ENCODE measurements at regions of chr19 and their contacts with region 1.

Region 1: GRCh38 chr19:38402967-38403861 is at the start of gene FAM98C:
- DNase-seq: peak; percentile 99 to 100
- ATAC-seq: peak; percentile 93 to 98
- H3K4me3 ChIP-seq: peak within 1 kb of the TSS; percentile 66
- H3K27ac ChIP-seq: peak within 1 kb of the TSS; percentile 80 to 89
- H3K4me1 ChIP-seq: peaks cover 10% of the 10 kb centered on the region
- CTCF ChIP-seq: peak; percentile 100
- EP300 ChIP-seq: no peak
- POLR2A ChIP-seq: peak; percentile 72
- RAD21 ChIP-seq: peak; percentile 96 to 100
- polyA plus RNA-seq, gene FAM98C: 12.8 and 13.8 TPM in 2 replicates

Region 2: DNA sequence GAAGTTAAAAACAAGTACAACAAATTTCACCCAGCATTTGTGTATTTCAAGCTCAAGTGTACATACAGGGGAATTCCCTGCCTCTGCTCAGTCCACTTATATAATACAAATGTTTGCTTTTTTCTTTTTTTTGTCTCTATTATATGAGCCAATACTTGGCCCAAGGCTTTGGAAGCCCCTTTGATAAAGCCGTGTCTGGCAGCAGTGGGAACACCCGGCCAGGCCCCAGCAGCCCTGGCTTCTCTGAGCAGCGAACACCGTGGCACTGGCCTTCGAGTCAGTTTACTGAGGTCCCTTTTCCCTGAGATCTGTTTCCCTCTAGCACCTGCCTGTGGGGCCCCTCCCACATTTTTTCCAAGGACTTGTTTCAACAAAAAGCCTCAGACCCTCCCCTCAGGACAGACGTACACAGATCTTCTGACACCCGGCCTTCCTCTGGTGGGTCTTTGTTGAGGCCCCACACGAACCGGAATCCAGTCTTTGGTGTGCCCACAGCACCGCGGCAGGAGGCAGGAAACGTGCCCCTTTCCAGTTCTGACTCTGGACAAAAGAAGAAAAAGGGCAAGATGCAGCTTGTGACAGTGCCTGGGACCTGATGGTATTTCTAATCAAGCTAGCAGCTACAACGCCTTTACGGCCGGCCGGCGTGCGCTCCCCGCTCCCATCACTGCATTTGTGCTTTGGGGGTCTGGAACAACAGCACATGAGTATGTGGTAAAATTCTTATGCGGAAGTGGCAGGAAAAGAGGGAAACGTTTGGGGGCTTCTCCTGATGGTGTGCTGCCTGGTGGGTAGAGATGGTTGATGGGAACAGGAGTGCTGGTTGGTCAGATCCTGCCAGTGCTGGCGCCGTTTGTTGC is 482.4 kb before region 1 on chr19:
- CTCF ChIA-PET with region 1: no interaction called
- POLR2A ChIA-PET with region 1: no interaction called
- DNase-seq: no peak
- ATAC-seq: 0 out of 6 replicates have a peak, but pooled peaks of 1 of the 2 experiments have one; percentile 23
- H3K4me3 ChIP-seq: no peak overlapping the region
- H3K27ac ChIP-seq: no peak overlapping the region
- H3K4me1 ChIP-seq: peaks cover 9% of the 10 kb centered on the region; the same call in 2 of the 3 replicates
- CTCF ChIP-seq: no peak
- EP300 ChIP-seq: no peak
- POLR2A ChIP-seq: no peak
- RAD21 ChIP-seq: no peak

Region 3: DNA sequence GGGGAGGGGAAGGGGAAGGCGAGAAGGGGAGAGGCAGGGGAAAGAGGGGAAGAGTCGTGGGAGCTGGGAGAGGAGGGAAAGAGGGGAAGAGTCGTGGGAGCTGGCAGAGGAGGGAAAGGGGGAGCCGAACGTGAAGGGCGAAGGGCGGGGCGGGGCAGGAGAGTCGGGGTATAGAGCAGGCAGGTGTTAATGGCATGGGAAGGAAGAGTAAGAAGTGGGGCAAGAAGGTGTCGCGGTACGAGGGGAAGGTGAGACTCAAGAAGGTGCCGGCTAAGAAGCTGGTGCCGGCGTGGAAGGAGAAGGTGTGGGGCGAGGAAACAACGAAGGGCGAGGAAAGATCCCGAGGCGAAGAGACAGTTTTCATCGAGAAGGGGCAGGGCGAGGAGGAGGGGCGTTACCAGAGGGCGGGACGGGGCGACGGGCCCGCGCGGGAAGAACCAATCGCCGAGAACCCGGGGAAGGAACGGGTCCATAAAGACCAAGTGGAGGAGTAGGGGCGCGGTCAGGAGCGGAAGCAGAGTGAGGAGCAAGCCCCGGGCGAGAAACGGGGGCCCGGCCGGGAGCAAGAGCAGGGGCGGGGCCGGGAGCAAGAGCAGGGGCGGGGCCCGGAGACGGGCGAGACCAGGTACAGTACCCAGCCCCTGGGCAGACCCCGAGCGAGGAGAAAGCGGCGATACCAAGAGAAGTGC is 67.1 kb before region 1 on chr19:
- CTCF ChIA-PET with region 1: interaction called, 10 read pairs
- POLR2A ChIA-PET with region 1: no interaction called
- DNase-seq: peak; percentile 99 to 100
- ATAC-seq: peak; percentile 82 to 92
- H3K4me3 ChIP-seq: peak overlapping the region; percentile 66
- H3K27ac ChIP-seq: peak overlapping the region; percentile 74 to 82
- H3K4me1 ChIP-seq: peaks cover 8% of the 10 kb centered on the region; the same call in 2 of the 3 replicates
- CTCF ChIP-seq: no peak
- EP300 ChIP-seq: no peak
- POLR2A ChIP-seq: no peak
- RAD21 ChIP-seq: no peak

Region 4: GRCh38 chr19:38441657-38442348 is 38.6 kb after region 1 on chr19:
- CTCF ChIA-PET with region 1: interaction called, 65 read pairs
- POLR2A ChIA-PET with region 1: no interaction called
- DNase-seq: peak in 1 of 2 experiments; percentile 60
- ATAC-seq: peak; percentile 46 to 81; a peak in 5 of 6 replicates
- H3K4me3 ChIP-seq: no peak overlapping the region
- H3K27ac ChIP-seq: no peak overlapping the region
- H3K4me1 ChIP-seq: no peaks in the 10 kb centered on the region
- CTCF ChIP-seq: no peak
- EP300 ChIP-seq: no peak
- POLR2A ChIP-seq: no peak
- RAD21 ChIP-seq: peak in 1 of 2 experiments; percentile 37; a peak in 1 of 5 replicates

Region 5: DNA sequence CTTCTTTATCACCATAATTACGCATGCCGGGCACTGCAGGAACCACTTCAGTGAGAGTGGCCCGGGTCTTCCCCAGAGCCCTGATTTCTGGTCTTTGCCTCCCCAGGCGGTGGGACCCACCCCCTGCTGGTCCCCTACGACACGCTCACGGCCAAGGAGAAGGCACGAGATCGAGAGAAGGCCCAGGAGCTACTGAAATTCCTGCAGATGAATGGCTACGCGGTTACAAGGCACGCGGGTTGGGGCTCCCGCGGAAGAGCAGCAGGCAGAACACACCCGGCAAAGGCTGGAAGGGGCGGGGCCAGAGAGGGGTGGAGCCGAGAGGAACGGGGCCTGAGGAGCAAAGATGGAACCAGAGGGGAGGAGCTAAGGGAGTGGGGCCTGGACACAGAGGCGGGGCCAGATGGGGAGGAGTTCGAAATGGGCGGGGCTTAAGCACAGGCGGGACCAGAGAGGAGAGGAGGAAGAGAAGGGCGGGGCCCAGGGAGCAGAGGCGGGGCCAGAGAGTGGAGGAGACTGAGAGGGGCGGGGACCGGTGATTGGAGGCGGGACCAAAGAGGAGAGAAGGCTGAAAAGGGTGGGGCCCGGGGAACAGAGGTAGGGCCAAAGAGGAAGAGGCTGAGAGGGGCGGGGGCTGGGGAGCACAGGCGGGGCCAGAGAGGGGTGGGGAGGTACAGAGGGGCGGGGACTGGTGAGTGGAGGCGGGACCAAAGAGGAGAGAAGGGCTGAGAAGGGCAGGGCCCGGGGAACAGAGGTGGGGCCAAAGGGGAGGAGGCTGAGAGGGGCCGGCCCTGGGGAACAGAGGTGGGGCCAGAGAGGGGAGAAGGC is 103.7 kb after region 1 on chr19:
- CTCF ChIA-PET with region 1: interaction called, 105 read pairs
- POLR2A ChIA-PET with region 1: interaction called, 12 read pairs
- DNase-seq: peak; percentile 100
- ATAC-seq: peak; percentile 81 to 92
- H3K4me3 ChIP-seq: peak overlapping the region; percentile 38
- H3K27ac ChIP-seq: peak overlapping the region; percentile 63 to 75
- H3K4me1 ChIP-seq: peaks cover 16% of the 10 kb centered on the region
- CTCF ChIP-seq: no peak
- EP300 ChIP-seq: no peak
- POLR2A ChIP-seq: peak; percentile 87
- RAD21 ChIP-seq: no peak

Region 6: DNA sequence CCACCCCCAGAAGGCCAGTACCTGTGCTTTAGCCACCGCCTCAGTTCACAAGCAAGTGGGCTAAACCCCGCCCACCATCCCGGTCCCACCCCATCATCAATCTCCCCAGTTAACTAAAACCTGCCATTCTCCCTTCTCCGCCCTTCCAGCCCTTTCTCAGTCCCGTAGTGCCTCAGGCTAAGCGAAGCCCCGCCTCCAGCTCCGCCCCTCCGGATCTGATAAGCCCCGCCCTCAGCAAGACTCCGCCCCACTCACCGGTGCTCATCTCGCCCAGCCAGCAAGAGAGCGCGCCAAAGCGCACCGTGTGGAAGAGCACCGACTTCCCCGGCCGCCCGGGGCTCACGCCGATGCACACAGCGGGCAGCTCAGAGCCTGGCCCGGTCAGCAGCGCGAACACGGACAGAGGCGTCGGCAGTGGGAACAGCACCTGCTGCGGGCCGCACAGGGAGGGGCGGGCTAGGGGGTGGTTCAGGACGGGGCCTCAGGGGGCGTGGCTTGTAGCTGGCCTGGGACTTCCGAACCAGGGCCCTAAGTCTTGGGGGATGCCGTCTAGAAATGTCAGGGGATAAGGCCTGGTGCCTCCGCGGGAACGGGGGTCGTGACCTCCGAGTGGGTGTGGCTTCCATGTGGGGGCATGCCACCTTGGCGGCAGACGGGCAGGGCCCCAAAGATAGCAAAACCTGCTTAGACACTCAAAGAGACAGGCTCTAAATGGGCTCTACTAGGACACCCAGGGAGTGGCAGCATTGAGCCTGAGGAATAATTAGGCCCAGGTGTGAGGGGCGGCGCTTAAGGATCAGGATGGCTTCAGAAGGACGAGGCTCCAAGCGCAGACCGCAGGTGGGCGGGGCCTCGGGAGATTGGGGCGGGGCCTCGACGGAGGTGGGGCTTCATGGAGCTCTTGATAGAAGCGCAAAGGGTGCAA is 193.1 kb after region 1 on chr19:
- CTCF ChIA-PET with region 1: interaction called, 12 read pairs
- POLR2A ChIA-PET with region 1: no interaction called
- DNase-seq: peak; percentile 84 to 90
- ATAC-seq: peak; percentile 84 to 89
- H3K4me3 ChIP-seq: peak overlapping the region; percentile 42
- H3K27ac ChIP-seq: peak overlapping the region; percentile 19 to 56; a peak in 4 of 6 replicates
- H3K4me1 ChIP-seq: 0 out of 3 replicates have a peak, but pooled peaks cover 5% of the 10 kb centered on the region
- CTCF ChIP-seq: no peak
- EP300 ChIP-seq: 0 out of 5 replicates have a peak, but pooled peaks of 1 of the 2 experiments have one; percentile 12
- POLR2A ChIP-seq: no peak
- RAD21 ChIP-seq: no peak

Region 7: GRCh38 chr19:38693380-38694223 is 290.4 kb after region 1 on chr19:
- CTCF ChIA-PET with region 1: interaction called, 13 read pairs
- POLR2A ChIA-PET with region 1: no interaction called
- DNase-seq: peak; percentile 91 to 92
- ATAC-seq: peak; percentile 10 to 54
- H3K4me3 ChIP-seq: 0 out of 3 replicates have a peak overlapping the region, but pooled peaks have one; percentile 1
- H3K27ac ChIP-seq: peak overlapping the region; percentile 93 to 94
- H3K4me1 ChIP-seq: peaks cover 100% of the 10 kb centered on the region
- CTCF ChIP-seq: no peak
- EP300 ChIP-seq: peak; percentile 55 to 84; a peak in 3 of 5 replicates
- POLR2A ChIP-seq: no peak
- RAD21 ChIP-seq: 0 out of 5 replicates have a peak, but pooled peaks of 1 of the 2 experiments have one; percentile 8

Region 8: DNA sequence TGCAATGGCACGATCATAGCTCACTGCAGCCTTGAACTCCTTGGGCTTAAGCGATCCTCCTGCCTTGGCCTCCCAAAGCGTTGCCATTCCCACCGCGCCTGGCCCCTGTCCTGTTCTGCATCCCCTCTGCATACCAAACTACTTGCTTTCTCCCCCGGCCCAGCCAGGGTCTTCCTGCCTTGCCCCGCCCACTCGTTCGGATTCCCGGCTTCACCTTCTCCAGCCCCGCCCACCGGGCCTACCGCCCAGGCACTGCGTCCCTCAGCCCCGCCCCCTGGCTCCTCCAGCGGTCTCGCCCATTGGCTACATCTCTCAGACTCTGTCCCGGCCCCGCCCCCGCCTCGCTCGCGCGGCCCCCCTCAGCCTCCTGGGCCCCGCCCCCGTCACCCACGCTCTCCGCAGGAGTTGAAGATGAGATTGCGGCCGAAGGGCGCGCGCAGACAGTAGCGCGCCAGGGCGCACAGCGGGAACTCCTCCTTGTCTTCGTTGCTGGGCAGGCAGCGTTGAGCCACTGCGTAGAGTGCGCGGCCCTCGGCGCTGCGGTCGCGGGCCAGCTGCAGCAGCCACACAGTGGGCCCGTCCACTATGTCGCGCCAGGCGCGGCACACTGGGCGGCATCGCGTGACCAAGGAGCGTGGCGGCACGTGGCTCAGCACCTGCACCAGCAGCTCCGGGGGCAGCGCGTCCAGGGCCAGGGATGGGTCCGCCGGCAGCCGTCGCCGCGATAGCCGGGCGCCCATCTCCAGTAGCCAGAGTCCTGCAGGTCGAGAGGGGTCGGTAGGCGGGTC is 546.6 kb after region 1 on chr19:
- CTCF ChIA-PET with region 1: interaction called, 13 read pairs
- POLR2A ChIA-PET with region 1: no interaction called
- DNase-seq: no peak
- ATAC-seq: no peak
- H3K4me3 ChIP-seq: no peak overlapping the region
- H3K27ac ChIP-seq: no peak overlapping the region
- H3K4me1 ChIP-seq: peaks cover 23% of the 10 kb centered on the region
- CTCF ChIP-seq: no peak
- EP300 ChIP-seq: no peak
- POLR2A ChIP-seq: peak; percentile 27
- RAD21 ChIP-seq: no peak